Left ventricle myocardium superior (tissue), 1 donor: ENCODE measurements at regions of chr3 and their contacts with region 1.

Region 1: GRCh38 chr3:43153216-43154083 is 47.6 kb upstream of the POMGNT2 start:
- DNase-seq: peak; percentile 69
- ATAC-seq: peak; percentile 84

Region 2: GRCh38 chr3:42961633-42962032 is 191.8 kb before region 1 on chr3:
- intact Hi-C with region 1: loop called (anchors 5 kb)
- DNase-seq: no peak
- ATAC-seq: peak; percentile 68